ENCODE measurements at regions of chr12 and their contacts with region 1.

Region 1: GRCh38 chr12:25386831-25387731 is 136.4 kb upstream of the KRAS start:
- DNase-seq: peak; percentile 83
- ATAC-seq: peak; percentile 17
- H3K4me3 Mint-ChIP-seq: peak overlapping the region; percentile 97
- H3K27ac Mint-ChIP-seq: peak overlapping the region; percentile 100
- H3K4me1 Mint-ChIP-seq: peaks cover 53% of the 10 kb centered on the region
- H3K27me3 Mint-ChIP-seq: peaks cover 12% of the 10 kb centered on the region

Region 2: GRCh38 chr12:24991209-24992049 is 395.7 kb before region 1 on chr12:
- CTCF ChIA-PET with region 1: interaction called, 5 read pairs
- POLR2A ChIA-PET with region 1: no interaction called
- intact Hi-C with region 1: loop called in 1 of 2 experiments (anchors 1 kb)
- DNase-seq: no peak
- ATAC-seq: peak; percentile 85
- H3K4me3 Mint-ChIP-seq: no peak overlapping the region
- H3K27ac Mint-ChIP-seq: no peak overlapping the region
- H3K4me1 Mint-ChIP-seq: no peaks in the 10 kb centered on the region
- H3K27me3 Mint-ChIP-seq: no peaks in the 10 kb centered on the region

Region 3: GRCh38 chr12:25151476-25151875 is 235.6 kb before region 1 on chr12:
- CTCF ChIA-PET with region 1: no interaction called
- POLR2A ChIA-PET with region 1: no interaction called
- intact Hi-C with region 1: loop called in 1 of 2 experiments (anchors 1 kb)
- DNase-seq: no peak
- ATAC-seq: no peak
- H3K4me3 Mint-ChIP-seq: no peak overlapping the region
- H3K27ac Mint-ChIP-seq: no peak overlapping the region
- H3K4me1 Mint-ChIP-seq: peaks cover 6% of the 10 kb centered on the region
- H3K27me3 Mint-ChIP-seq: no peaks in the 10 kb centered on the region

Region 4: GRCh38 chr12:25200703-25201102 is 186.4 kb before region 1 on chr12:
- CTCF ChIA-PET with region 1: interaction called, 12 read pairs
- POLR2A ChIA-PET with region 1: no interaction called
- intact Hi-C with region 1: no loop called
- DNase-seq: no peak
- ATAC-seq: no peak
- H3K4me3 Mint-ChIP-seq: no peak overlapping the region
- H3K27ac Mint-ChIP-seq: no peak overlapping the region
- H3K4me1 Mint-ChIP-seq: peaks cover 16% of the 10 kb centered on the region
- H3K27me3 Mint-ChIP-seq: no peaks in the 10 kb centered on the region

Region 5: GRCh38 chr12:25208554-25208953 is 178.5 kb before region 1 on chr12:
- CTCF ChIA-PET with region 1: interaction called, 19 read pairs
- POLR2A ChIA-PET with region 1: no interaction called
- intact Hi-C with region 1: loop called (anchors 1 kb)
- DNase-seq: no peak
- ATAC-seq: no peak
- H3K4me3 Mint-ChIP-seq: no peak overlapping the region
- H3K27ac Mint-ChIP-seq: peak overlapping the region; percentile 42
- H3K4me1 Mint-ChIP-seq: peaks cover 5% of the 10 kb centered on the region
- H3K27me3 Mint-ChIP-seq: no peaks in the 10 kb centered on the region

Region 6: DNA sequence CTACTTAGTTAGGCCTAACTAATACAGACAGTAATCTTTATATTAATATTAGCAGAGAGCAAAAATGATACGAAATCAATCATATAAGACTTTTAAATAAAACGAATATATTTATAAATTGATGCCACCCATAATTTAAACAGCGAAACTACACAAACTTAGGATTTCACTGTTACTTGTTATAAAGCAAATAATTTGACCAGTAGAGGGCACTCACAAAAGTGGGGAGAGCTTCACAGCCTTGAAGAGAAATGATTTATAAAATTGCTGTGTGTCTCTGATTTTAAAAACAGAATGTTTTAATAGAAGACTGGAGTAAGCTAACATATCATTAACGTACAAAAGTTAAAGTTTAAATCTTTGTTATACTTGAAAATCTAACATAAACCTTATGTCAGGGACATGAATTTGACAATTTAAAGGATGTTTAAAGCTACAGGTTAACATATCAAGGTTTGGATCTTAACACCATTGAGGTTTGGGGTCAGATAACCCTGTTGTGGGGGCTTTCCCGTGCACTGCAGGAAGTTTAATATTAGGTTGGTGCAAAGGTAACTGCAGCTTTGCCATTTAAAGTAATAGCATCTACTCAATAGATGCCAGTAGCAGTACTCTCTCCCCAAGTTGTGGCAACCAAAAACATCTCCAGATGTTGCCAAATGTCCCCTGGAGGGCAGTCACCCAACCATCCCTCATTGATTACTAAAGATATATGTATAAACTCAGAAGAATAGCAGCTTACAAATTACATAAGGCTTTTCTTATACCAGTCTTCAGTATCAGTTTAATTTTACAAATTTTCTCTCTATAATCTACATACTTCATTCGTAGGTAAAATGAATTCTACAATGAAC is 145.7 kb before region 1 on chr12:
- CTCF ChIA-PET with region 1: interaction called, 7 read pairs
- POLR2A ChIA-PET with region 1: no interaction called
- intact Hi-C with region 1: loop called (anchors 1 kb)
- DNase-seq: no peak
- ATAC-seq: peak; percentile 49
- H3K4me3 Mint-ChIP-seq: no peak overlapping the region
- H3K27ac Mint-ChIP-seq: peak overlapping the region; percentile 3
- H3K4me1 Mint-ChIP-seq: peaks cover 31% of the 10 kb centered on the region
- H3K27me3 Mint-ChIP-seq: no peaks in the 10 kb centered on the region

Region 7: GRCh38 chr12:25929142-25929541 is 542.1 kb after region 1 on chr12:
- CTCF ChIA-PET with region 1: no interaction called
- POLR2A ChIA-PET with region 1: no interaction called
- intact Hi-C with region 1: no loop called
- DNase-seq: no peak
- ATAC-seq: no peak
- H3K4me3 Mint-ChIP-seq: no peak overlapping the region
- H3K27ac Mint-ChIP-seq: no peak overlapping the region
- H3K4me1 Mint-ChIP-seq: no peaks in the 10 kb centered on the region
- H3K27me3 Mint-ChIP-seq: no peaks in the 10 kb centered on the region

Measured in activated CD4-positive, alpha-beta T cell treated with anti-CD3 and anti-CD28 coated beads for 36 hours (primary cell).